IMR-90 (cell line): ENCODE measurements at regions of chr6 and their contacts with region 1.

Region 1: GRCh38 chr6:112372226-112372806 is 25.2 kb downstream of the RFPL4B start:
- DNase-seq: peak; percentile 46
- ATAC-seq: peak; percentile 93
- H3K4me3 ChIP-seq: no peak overlapping the region
- H3K27ac ChIP-seq: no peak overlapping the region
- H3K4me1 ChIP-seq: no peaks in the 10 kb centered on the region
- H3K27me3 ChIP-seq: peaks cover 11% of the 10 kb centered on the region
- CTCF ChIP-seq: peak; percentile 63
- POLR2A ChIP-seq: no peak
- RAD21 ChIP-seq: peak; percentile 63

Region 2: DNA sequence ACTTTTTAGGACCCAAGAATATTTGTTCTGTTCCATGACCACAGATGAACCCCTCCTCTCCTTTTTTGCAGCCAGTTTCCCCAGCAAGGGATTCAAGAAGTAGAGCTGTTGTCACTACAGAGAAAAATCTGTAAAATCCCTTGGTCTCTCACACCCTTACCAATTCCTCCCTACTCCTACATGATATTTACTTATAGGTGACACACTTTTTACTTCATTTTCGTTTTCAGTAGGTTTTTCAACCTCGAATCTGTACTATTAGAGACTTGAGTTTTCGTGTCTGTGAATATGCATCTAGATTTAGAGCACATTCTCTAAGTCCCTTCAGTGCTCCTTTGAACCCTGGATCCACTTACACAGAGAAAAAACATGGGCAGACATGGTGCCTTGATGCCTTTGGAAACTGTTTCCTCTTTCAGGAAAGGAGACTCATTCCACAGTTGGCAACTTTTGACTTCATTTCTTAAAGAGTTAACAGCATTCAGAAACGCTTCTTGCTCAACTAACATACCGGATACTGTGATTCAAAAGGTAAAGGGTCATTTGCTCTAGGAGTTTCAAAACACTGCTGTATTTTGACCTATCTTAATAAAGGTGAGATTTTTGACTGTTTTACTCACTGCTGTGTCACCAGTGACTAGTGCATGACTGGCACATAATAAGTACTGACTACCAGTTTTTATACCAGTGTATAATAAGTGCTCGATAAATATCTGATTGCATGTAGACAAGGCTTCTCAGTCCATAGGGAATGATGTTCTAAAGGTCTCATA is 168.6 kb before region 1 on chr6:
- CTCF ChIA-PET with region 1: no interaction called
- POLR2A ChIA-PET with region 1: no interaction called
- dilution Hi-C with region 1: no loop called
- in situ Hi-C with region 1: no loop called
- intact Hi-C with region 1: loop called (anchors 5 kb)
- DNase-seq: peak; percentile 95
- ATAC-seq: peak; percentile 73
- H3K4me3 ChIP-seq: peak overlapping the region; percentile 17; the same call in 1 of the 2 replicates
- H3K27ac ChIP-seq: peak overlapping the region; percentile 83
- H3K4me1 ChIP-seq: peaks cover 18% of the 10 kb centered on the region
- H3K27me3 ChIP-seq: no peaks in the 10 kb centered on the region
- CTCF ChIP-seq: no peak
- POLR2A ChIP-seq: peak; percentile 29; the same call in 1 of the 2 replicates
- RAD21 ChIP-seq: no peak

Region 3: GRCh38 chr6:112311950-112312547 is 60.3 kb before region 1 on chr6:
- CTCF ChIA-PET with region 1: interaction called, 3 read pairs
- POLR2A ChIA-PET with region 1: no interaction called
- dilution Hi-C with region 1: no loop called
- in situ Hi-C with region 1: no loop called
- intact Hi-C with region 1: loop called (anchors 10 kb)
- DNase-seq: peak; percentile 38
- ATAC-seq: peak; percentile 49; the same call in 1 of the 2 replicates
- H3K4me3 ChIP-seq: no peak overlapping the region
- H3K27ac ChIP-seq: no peak overlapping the region
- H3K4me1 ChIP-seq: peaks cover 5% of the 10 kb centered on the region; the same call in 1 of the 2 replicates
- H3K27me3 ChIP-seq: no peaks in the 10 kb centered on the region
- CTCF ChIP-seq: peak; percentile 73
- POLR2A ChIP-seq: no peak
- RAD21 ChIP-seq: peak; percentile 87